Activated CD8-positive, alpha-beta memory T cell treated with anti-CD3 and anti-CD28 coated beads, Interleukin-2, amount 10 ng/mL, durations not matched to agents 7 days and 5 days (primary cell): ENCODE measurements at regions of chr20 and their contacts with region 1.

Region 1: DNA sequence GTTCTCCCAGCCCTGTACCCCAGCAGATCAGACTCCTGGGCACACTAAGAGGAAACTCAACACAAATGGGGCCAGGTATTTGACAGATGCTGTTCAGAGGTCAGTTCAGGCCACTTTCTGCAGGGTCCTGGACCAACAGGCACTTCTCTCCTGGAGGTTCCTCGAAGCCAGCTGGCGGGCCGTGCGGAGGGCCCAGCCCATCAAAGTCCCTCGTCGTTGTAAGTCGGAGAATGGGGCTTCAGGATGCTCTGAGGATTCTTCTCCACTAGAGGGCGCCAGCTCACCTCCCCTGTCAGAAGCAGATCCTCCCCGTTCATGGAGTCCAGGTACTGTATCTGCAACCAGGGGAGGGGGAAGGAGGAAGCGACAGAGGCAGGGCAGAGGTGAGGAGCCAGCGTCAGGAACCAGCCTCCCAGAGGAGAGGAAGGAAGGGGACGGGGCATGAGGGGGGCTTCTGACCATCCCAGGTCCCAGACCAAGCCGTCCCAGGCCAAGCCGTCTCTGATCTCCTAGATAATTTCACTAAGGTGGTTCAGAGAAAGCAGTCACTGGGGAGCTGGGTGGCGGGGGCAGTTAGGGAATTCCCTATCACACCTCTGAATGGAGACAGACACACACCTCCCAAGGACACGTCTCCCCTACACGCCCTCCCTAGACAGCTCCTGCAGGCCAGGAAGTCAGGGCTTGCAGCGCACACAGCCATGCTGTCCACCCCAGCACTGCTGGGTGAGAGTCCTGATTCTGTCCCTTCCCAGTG is 11.7 kb upstream of the FAM83C start:
- DNase-seq: peak; percentile 93
- ATAC-seq: peak; percentile 66
- H3K4me3 Mint-ChIP-seq: no peak overlapping the region
- H3K27ac Mint-ChIP-seq: peak overlapping the region; percentile 93
- H3K4me1 Mint-ChIP-seq: peaks cover 64% of the 10 kb centered on the region
- H3K27me3 Mint-ChIP-seq: no peaks in the 10 kb centered on the region

Region 2: DNA sequence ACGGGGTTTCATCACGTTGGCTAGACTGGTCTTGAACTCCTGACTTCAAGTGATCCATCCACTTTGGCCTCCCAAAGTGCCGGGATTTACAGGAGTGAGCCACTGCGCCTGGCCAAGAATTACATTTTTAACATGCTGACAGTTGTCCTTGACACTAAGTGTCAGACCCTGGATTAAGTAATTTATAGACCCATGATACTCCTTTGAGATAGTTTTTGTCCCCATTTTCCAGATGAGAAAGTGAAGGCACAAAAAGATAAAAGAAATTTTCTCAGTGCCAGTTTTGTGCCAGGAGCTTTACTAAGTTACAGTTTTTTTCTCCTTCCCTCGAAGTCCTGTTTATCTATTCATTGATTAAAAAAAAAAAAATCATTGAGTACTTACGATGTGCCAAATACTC is 146.9 kb before region 1 on chr20:
- CTCF ChIA-PET with region 1: no interaction called
- DNase-seq: no peak
- ATAC-seq: no peak
- H3K4me3 Mint-ChIP-seq: no peak overlapping the region
- H3K27ac Mint-ChIP-seq: no peak overlapping the region
- H3K4me1 Mint-ChIP-seq: peaks cover 13% of the 10 kb centered on the region
- H3K27me3 Mint-ChIP-seq: no peaks in the 10 kb centered on the region

Region 3: DNA sequence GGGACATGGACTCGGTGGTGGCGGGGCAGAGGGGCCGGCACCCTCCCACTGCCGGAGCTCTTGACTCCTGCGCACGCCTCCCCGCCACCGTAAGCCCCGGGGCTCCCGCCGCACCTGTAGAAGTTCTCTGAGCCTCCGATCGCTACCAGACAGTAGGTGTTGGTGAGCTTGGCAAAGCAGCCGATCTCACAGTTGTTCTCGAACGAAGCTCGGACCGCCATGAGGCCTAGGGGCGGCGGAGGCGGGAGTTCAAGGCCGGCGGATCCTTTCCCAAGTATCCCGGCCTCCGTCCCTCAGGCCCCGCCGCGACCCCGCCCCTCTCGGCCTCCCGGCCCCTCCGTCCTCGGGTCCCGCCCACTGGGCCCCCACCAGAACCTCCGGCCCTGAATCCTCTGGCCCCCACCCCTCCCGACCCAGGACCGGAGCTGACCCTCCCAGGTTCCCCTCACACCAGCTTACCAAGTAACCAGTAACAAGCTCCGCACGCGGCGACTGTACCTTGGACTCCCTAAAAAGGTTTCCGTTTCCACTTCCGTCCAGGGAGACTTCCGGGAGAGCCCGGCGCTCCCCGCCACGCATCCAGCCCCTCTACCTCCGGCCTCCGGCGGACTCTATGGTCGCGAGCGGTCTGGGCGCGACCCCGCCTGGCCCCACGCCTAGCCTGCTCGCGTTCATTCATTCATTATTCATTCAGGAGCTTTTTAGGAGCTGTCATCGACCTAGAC is 19.5 kb before region 1 on chr20 and contains the start of gene EIF6:
- CTCF ChIA-PET with region 1: interaction called, 22 read pairs
- DNase-seq: peak; percentile 87
- ATAC-seq: peak; percentile 89
- H3K4me3 Mint-ChIP-seq: peak within 1 kb of the TSS; percentile 84
- H3K27ac Mint-ChIP-seq: peak within 1 kb of the TSS; percentile 90
- H3K4me1 Mint-ChIP-seq: peaks cover 30% of the 10 kb centered on the region
- H3K27me3 Mint-ChIP-seq: no peaks in the 10 kb centered on the region
- total RNA-seq, gene EIF6: 98.6 to 121 TPM

Region 4: GRCh38 chr20:35293303-35294292 is 10.3 kb before region 1 on chr20:
- CTCF ChIA-PET with region 1: interaction called, 19 read pairs
- DNase-seq: no peak
- ATAC-seq: no peak
- H3K4me3 Mint-ChIP-seq: no peak overlapping the region
- H3K27ac Mint-ChIP-seq: no peak overlapping the region
- H3K4me1 Mint-ChIP-seq: peaks cover 2% of the 10 kb centered on the region
- H3K27me3 Mint-ChIP-seq: peaks cover 10% of the 10 kb centered on the region

Region 5: GRCh38 chr20:35318502-35319157 is 14.7 kb after region 1 on chr20:
- CTCF ChIA-PET with region 1: interaction called, 16 read pairs
- DNase-seq: no peak
- ATAC-seq: no peak
- H3K4me3 Mint-ChIP-seq: no peak overlapping the region
- H3K27ac Mint-ChIP-seq: peak overlapping the region; percentile 54
- H3K4me1 Mint-ChIP-seq: peaks cover 50% of the 10 kb centered on the region
- H3K27me3 Mint-ChIP-seq: no peaks in the 10 kb centered on the region

Region 6: DNA sequence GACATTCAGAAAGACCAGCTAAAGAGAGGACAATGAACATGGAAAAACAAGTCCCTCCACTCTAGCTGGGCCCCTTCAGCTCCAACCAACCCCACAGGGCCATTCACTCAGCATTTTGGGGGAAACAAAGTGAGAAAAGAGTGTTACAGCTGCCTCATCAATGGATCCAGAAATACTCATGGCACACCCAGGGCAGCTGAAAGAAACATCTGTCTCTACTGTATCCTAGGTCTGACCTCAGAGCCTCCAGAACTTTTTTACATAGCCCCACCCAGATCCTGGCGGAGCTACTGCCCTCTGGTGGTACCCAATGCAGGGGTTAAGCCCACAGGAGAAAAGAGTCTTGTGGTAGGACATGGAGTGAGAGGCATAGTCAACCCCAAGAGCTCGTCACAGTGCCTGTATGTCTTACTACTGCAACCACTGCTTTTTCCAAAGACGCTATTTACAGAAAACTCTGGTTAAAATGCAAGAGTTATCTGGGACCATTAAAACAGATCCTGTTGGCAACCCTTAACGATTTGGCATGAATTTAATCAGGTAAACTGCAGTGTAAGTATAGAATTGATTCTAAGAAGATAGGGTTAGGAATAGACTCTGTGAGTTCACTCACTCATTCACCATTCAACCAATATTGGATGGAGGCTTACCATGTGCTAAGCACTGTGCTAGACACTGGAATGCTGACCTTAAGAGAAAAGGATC is 25.7 kb after region 1 on chr20:
- CTCF ChIA-PET with region 1: interaction called, 76 read pairs
- DNase-seq: peak; percentile 76
- ATAC-seq: peak; percentile 82
- H3K4me3 Mint-ChIP-seq: no peak overlapping the region
- H3K27ac Mint-ChIP-seq: no peak overlapping the region
- H3K4me1 Mint-ChIP-seq: peaks cover 9% of the 10 kb centered on the region
- H3K27me3 Mint-ChIP-seq: no peaks in the 10 kb centered on the region

Region 7: GRCh38 chr20:35395728-35396127 is 91.8 kb after region 1 on chr20:
- CTCF ChIA-PET with region 1: no interaction called
- DNase-seq: no peak
- ATAC-seq: no peak
- H3K4me3 Mint-ChIP-seq: no peak overlapping the region
- H3K27ac Mint-ChIP-seq: no peak overlapping the region
- H3K4me1 Mint-ChIP-seq: peaks cover 3% of the 10 kb centered on the region
- H3K27me3 Mint-ChIP-seq: no peaks in the 10 kb centered on the region

Region 8: GRCh38 chr20:35447082-35447789 is 143.3 kb after region 1 on chr20:
- CTCF ChIA-PET with region 1: interaction called, 251 read pairs
- DNase-seq: peak; percentile 95
- ATAC-seq: peak; percentile 98
- H3K4me3 Mint-ChIP-seq: peak overlapping the region; percentile 76
- H3K27ac Mint-ChIP-seq: peak overlapping the region; percentile 37
- H3K4me1 Mint-ChIP-seq: peaks cover 7% of the 10 kb centered on the region
- H3K27me3 Mint-ChIP-seq: no peaks in the 10 kb centered on the region

Region 9: GRCh38 chr20:35454881-35455609 is 151.1 kb after region 1 on chr20 and contains the start of gene CEP250:
- CTCF ChIA-PET with region 1: interaction called, 27 read pairs
- DNase-seq: peak; percentile 96
- ATAC-seq: peak; percentile 98
- H3K4me3 Mint-ChIP-seq: peak within 1 kb of the TSS; percentile 84
- H3K27ac Mint-ChIP-seq: peak within 1 kb of the TSS; percentile 97
- H3K4me1 Mint-ChIP-seq: peaks cover 25% of the 10 kb centered on the region
- H3K27me3 Mint-ChIP-seq: no peaks in the 10 kb centered on the region
- total RNA-seq, gene CEP250: 68.6 to 86.9 TPM